Ovary (tissue), 10 donors: ENCODE measurements at regions of chr17 and their contacts with region 1.

Region 1: DNA sequence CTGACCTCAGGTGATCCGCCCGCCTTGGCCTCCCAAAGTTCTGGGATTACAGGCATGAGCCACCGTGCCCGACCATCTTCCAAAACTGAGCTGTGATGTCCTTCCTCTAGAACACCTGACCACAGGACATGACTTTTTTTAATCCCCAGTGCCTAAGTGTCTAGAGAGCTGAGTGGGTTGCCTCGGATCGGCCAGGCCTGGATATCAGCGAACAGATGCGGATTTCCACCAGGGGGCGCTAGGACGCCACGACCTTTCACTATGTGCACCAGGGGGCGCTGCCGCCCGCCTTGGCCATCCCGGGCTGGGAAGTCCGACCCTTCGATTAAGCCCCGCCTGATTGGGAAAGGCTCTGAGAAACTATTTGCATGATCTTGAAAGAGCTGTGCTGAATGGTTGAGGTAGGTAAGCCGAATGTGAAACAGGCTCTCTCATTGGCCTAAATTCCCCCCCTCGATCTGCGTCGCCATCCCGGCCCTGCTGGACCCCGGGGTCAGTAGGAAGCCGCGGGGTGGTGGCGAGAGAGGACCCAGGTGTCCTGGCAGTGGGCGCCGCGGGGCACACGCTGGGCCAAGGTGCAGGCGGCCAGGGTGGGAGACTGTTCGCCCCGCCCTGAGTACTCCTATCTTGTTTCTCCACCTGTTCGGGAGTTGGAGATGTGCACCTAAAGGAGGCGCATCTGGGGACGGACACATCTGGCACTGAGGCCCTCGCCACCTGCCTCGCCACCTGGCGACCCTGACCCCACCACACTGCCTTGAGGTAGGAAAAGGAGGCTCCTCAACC is at the start of gene ACBD4:
- DNase-seq: peak; percentile 94 to 98 (median 97)
- H3K4me3 ChIP-seq: peak within 1 kb of the TSS; percentile 76
- H3K27ac ChIP-seq: peak within 1 kb of the TSS; percentile 65 to 81
- H3K4me1 ChIP-seq: peaks cover 2% of the 10 kb centered on the region
- H3K27me3 ChIP-seq: no peaks in the 10 kb centered on the region
- CTCF ChIP-seq: peak; percentile 100
- EP300 ChIP-seq: no peak
- POLR2A ChIP-seq: peak; percentile 69
- total RNA-seq, gene ACBD4: 12.4 to 24.0 (median 18.5) TPM

Region 2: GRCh38 chr17:45161019-45161825 is 25.8 kb after region 1 on chr17:
- intact Hi-C with region 1: loop called in 1 of 4 experiments (anchors 2 kb)
- DNase-seq: peak; percentile 96 to 99 (median 98)
- H3K4me3 ChIP-seq: peak overlapping the region; percentile 90
- H3K27ac ChIP-seq: peak overlapping the region; percentile 93 to 99
- H3K4me1 ChIP-seq: peaks cover 13% of the 10 kb centered on the region
- H3K27me3 ChIP-seq: no peaks in the 10 kb centered on the region
- CTCF ChIP-seq: no peak
- EP300 ChIP-seq: peak; percentile 74
- POLR2A ChIP-seq: peak; percentile 99

Region 3: DNA sequence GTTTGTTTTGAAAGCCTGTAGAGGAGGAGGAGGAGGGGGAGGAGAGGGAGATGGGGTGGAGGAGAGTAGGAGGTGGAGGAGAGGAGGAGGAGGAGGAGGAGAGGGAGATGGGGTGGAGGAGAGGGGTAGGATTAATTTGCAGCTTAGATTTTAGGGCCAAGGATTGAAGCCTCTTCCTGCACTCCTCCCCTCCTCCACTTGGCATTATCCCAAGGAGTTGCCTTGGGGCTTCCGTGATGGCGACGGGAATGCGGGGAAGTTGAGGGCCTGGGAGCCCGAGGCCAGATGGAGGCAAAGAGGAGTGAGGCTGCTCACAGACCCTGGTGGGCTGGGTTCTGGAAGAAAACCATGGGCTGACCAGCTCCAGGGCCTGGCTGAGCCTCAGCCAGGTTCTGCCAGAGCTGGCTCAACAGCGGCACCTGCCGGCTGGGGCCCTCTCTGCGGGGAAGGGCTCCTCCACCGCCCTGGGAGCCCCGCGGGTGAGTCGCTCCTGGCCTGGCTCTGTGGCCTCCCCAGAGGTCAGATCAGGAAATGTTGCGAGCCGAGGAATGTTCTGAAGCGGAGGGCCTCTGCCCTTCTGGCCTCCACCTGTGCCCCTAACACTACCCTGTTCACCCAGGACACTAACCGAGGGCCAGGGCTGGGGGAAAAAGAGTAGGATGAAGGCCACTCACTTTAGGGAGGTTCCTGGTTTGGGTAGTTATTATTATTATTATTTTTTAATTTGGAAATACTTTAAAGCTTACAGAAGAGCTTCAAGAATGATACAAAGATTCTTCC is 62.4 kb after region 1 on chr17:
- intact Hi-C with region 1: loop called (anchors 1 to 5 kb)
- DNase-seq: peak; percentile 85 to 93 (median 91)
- H3K4me3 ChIP-seq: no peak overlapping the region
- H3K27ac ChIP-seq: no peak overlapping the region
- H3K4me1 ChIP-seq: peaks cover 4% of the 10 kb centered on the region
- H3K27me3 ChIP-seq: no peaks in the 10 kb centered on the region
- CTCF ChIP-seq: peak; percentile 94 to 98 (median 96)
- EP300 ChIP-seq: no peak
- POLR2A ChIP-seq: no peak

Region 4: DNA sequence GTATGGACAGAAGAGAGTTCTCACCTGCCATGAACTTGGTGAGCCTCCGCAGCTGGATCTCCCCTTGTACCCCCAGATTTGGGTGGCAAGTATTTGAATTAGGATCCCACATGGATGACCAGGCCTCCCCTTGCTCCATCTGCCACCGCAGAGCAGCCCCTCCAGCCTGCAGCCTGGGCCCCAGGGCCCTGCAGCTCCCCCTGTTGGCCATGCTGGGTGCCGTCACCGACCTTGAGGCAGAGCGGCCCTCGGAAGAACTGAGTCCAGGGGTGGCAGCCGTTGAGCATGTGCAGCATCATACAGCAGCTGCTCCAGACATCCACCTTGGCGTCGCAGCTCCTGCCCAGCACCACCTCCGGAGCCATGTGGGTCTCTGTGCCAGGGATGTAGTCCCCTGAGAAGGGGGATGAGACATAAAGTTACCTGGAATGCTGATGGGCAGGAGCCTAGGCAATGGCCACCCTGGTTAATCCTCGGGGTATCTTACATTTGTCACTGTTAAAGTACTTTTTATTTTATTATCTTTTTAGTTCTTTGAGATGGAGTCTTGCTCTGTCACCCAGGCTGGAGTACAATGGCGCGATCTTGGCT is 135.5 kb after region 1 on chr17:
- intact Hi-C with region 1: no loop called
- DNase-seq: no peak
- H3K4me3 ChIP-seq: no peak overlapping the region
- H3K27ac ChIP-seq: no peak overlapping the region
- H3K4me1 ChIP-seq: no peaks in the 10 kb centered on the region
- H3K27me3 ChIP-seq: no peaks in the 10 kb centered on the region
- CTCF ChIP-seq: no peak
- EP300 ChIP-seq: no peak
- POLR2A ChIP-seq: no peak

Region 5: DNA sequence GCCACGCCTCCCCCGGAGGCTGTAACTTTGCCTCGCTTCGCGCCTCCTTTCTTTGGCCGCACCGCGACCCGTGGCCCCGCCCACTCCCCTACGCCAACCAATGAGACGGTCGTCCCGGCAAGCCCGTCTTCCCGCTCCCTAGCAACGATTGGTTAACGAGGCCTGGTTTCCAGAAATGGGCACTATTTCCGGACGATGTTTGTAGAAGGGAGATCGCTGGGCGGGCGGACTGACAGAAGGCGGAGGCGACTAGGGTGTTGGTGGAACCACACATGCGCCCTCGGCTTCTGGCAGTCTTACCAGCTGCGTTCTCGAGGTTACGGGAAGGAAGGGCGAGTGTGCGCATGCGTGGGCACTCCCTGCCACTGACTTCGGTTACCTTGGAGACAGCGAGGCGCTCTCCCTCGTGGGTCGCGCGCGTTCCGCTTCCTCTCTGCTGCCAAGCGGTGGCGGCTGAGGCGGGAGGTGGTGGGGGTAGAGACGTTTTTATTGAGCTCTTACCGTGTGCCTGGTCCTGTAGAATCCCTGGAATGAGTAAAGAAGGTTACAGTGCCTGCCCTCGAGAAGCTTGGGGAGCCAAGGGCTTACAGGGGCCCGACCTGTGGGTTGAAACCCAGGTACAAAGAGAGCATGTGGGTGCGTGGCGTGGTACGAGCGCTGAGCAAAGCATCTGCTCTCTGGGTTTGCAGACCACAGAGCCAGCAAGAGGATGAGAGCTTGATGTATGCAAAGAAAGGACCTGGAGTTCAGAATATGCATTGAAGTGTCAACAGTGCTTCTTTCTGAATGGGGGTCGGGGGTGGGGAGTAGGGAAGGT is 181.9 kb after region 1 on chr17:
- intact Hi-C with region 1: loop called in 1 of 4 experiments (anchors 10 kb)
- DNase-seq: peak; percentile 100
- H3K4me3 ChIP-seq: peak overlapping the region; percentile 69
- H3K27ac ChIP-seq: peak overlapping the region in 1 of 2 donors; percentile 92
- H3K4me1 ChIP-seq: peaks cover 2% of the 10 kb centered on the region
- H3K27me3 ChIP-seq: no peaks in the 10 kb centered on the region
- CTCF ChIP-seq: no peak
- EP300 ChIP-seq: peak; percentile 35
- POLR2A ChIP-seq: peak; percentile 48